Head of caudate nucleus (tissue), 42 donors: ENCODE measurements at regions of chr3 and their contacts with region 1.

Region 1: GRCh38 chr3:138594150-138594934 is at the start of gene CEP70:
- DNase-seq: peak; percentile 86 to 97 (median 93)

Region 2: GRCh38 chr3:138542977-138543376 is 51.4 kb before region 1 on chr3:
- intact Hi-C with region 1: no loop called
- DNase-seq: no peak

Region 3: GRCh38 chr3:138694287-138695007 is 100.1 kb after region 1 on chr3:
- intact Hi-C with region 1: loop called (anchors 5 kb)
- DNase-seq: no peak

Region 4: DNA sequence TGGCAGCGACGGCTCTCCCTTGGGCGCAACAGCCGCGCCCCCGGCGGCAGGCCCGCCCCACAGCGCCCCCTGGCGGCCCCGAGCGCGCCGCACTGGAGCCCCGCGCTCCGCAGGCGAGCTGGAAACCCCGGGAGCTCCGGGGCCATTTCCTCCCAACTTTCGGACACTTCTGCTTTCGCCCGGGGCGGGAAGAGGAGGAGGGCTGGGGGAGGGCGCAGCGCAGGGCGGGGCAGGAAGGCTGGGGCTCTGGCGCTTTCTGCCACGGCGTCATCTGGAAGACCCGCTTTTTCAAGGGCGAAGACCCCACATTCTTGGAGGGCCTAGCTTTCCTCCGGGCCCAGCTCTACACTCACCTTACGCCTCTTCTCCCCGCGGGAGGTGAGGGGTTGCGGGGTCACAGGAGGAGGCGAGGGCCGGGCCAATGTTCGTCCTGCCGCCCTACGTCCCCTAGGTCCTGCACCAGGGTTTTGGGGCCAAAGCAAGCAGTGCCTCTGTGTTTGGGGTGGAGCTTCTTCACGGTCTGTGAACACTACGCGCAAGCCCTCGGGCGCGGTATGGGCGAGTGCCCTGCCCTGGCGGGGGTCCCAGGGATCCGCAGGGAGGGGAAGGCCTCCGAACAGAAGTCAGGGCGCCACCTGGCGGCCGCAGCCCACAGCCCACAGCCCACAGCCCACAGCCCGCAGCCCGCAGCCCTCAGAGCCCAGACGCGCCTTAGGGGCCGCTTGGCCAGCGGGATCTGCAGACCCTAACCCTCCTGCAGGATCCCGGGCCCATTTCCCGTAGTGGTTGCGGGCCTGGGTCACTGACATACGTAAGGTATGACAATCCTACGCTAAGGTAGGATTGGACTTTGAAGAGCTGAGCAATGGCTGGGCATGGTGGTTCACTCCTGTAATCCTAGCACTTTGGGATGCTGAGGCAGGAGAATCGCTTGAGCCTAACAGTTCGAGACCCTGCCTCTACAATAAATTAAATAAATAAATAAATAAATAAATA is 321.5 kb after region 1 on chr3:
- intact Hi-C with region 1: loop called (anchors 1 kb)
- DNase-seq: peak; percentile 76 to 95 (median 91)